Esophagus muscularis mucosa (tissue), 4 donors: ENCODE measurements at regions of chr2 and their contacts with region 1.

Region 1: GRCh38 chr2:179701524-179702110 is 159.8 kb downstream of the ZNF385B start:
- DNase-seq: no peak
- H3K4me3 ChIP-seq: no peak overlapping the region
- H3K27ac ChIP-seq: no peak overlapping the region
- H3K4me1 ChIP-seq: peaks cover 0 to 8% (median 4%) of the 10 kb centered on the region in 4 donors
- H3K27me3 ChIP-seq: no peaks in the 10 kb centered on the region
- CTCF ChIP-seq: no peak
- EP300 ChIP-seq: no peak
- POLR2A ChIP-seq: no peak

Region 2: DNA sequence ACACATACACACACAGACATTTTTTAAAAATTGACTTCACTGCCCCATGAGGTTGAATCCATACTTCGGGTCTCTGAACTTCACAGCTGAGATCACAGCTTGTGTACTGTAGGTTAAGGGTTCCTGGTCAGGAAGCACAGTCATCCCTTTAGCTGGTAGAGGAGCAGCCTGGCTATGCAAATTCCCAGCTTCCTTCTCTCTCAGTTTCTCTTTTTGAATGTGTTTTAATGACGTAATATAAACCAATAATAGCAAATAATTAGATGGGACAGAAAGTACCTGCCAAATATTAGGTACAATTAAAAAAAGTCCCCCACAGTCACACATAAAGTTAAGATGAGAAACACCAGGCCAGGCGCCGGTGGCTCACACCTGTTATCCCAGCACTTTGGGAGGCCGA is 18.9 kb before region 1 on chr2:
- intact Hi-C with region 1: loop called (anchors 2 kb)
- DNase-seq: no peak
- H3K4me3 ChIP-seq: no peak overlapping the region
- H3K27ac ChIP-seq: no peak overlapping the region
- H3K4me1 ChIP-seq: peaks cover 7 to 9% (median 9%) of the 10 kb centered on the region in 4 donors
- H3K27me3 ChIP-seq: no peaks in the 10 kb centered on the region
- CTCF ChIP-seq: no peak
- EP300 ChIP-seq: no peak
- POLR2A ChIP-seq: no peak

Region 3: DNA sequence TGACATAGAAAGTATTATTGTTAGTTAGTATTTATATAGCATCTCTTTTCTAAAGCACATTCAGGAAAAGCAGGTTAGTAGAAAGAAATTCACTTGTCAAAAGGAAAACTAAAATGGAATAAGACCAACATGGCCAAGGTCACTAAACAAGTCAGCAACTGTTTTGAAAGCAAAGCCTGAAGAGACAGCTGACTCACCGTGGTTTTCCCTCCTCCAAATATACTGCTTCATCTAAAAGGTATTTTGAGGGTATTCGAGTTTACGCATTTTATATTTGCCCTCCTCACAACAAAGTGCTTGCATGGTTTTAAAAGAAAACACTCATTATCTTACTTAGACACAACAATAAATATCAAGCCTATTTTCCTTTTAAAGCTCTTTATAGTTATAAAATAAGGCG is 135.8 kb after region 1 on chr2:
- intact Hi-C with region 1: no loop called
- DNase-seq: no peak
- H3K4me3 ChIP-seq: no peak overlapping the region
- H3K27ac ChIP-seq: no peak overlapping the region
- H3K4me1 ChIP-seq: peaks cover 0 to 16% (median 9%) of the 10 kb centered on the region in 4 donors
- H3K27me3 ChIP-seq: no peaks in the 10 kb centered on the region
- CTCF ChIP-seq: no peak
- EP300 ChIP-seq: no peak
- POLR2A ChIP-seq: no peak